ENCODE measurements at regions of chr11 and their contacts with region 1.

Region 1: DNA sequence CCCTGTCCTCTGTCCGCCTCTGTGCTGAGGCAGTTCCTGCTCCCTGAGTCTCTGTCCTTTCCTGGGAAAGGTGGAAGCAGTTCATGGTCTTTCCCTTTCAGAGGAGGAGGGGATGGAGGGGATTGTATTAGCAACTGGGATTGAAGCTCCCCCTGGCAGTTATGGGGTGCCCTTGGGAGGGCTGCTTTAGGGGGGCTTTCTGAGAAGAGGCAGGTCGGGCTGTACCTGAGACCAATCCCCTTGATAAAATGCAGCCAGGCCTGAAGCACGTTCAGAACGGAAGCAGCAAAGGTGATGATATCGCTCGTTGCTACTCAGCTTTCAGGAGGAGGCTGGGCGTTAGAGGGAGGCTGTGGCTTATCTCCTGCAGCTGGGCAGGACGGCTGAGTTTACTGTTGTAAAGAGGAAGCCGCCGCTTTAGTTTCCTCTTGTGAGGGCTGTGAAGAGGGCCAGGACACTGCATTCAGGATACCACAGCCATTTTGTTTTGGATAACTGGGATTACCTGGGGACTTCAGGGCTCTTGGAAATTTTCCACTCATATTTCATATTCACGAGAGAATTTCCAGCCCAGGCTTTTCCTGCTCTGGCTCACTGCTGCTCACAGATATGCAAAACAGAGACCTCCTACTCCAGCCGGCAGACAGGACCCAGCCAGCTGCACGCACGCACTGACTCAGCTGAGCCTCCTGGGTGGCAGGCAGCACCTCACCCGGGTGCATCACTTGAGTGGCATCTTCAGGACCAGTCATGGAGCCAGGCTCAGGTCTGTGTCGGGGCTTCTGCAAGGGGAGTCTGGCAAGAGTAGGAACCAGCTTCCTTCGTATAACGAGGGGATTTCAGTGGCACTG is 798 bp downstream of the AMPD3 start:
- DNase-seq: peak; percentile 69
- ATAC-seq: peak; percentile 70
- H3K4me3 Mint-ChIP-seq: peak overlapping the region; percentile 87
- H3K27ac Mint-ChIP-seq: peak overlapping the region; percentile 96
- H3K4me1 Mint-ChIP-seq: peaks cover 95% of the 10 kb centered on the region
- H3K27me3 Mint-ChIP-seq: no peaks in the 10 kb centered on the region
- CTCF ChIP-seq: no peak

Region 2: GRCh38 chr11:8688414-8689362 is 1767.2 kb before region 1 on chr11:
- CTCF ChIA-PET with region 1: no interaction called
- POLR2A ChIA-PET with region 1: no interaction called
- intact Hi-C with region 1: loop called (anchors 10 kb)
- DNase-seq: peak; percentile 84
- ATAC-seq: peak; percentile 90
- H3K4me3 Mint-ChIP-seq: peak overlapping the region; percentile 97
- H3K27ac Mint-ChIP-seq: peak overlapping the region; percentile 95
- H3K4me1 Mint-ChIP-seq: peaks cover 49% of the 10 kb centered on the region
- H3K27me3 Mint-ChIP-seq: no peaks in the 10 kb centered on the region
- CTCF ChIP-seq: no peak

Region 3: GRCh38 chr11:9675691-9676090 is 780.2 kb before region 1 on chr11:
- CTCF ChIA-PET with region 1: no interaction called
- POLR2A ChIA-PET with region 1: no interaction called
- intact Hi-C with region 1: no loop called
- DNase-seq: no peak
- ATAC-seq: peak; percentile 43
- H3K4me3 Mint-ChIP-seq: peak overlapping the region; percentile 74
- H3K27ac Mint-ChIP-seq: peak overlapping the region; percentile 84
- H3K4me1 Mint-ChIP-seq: peaks cover 67% of the 10 kb centered on the region
- H3K27me3 Mint-ChIP-seq: no peaks in the 10 kb centered on the region
- CTCF ChIP-seq: no peak

Region 4: DNA sequence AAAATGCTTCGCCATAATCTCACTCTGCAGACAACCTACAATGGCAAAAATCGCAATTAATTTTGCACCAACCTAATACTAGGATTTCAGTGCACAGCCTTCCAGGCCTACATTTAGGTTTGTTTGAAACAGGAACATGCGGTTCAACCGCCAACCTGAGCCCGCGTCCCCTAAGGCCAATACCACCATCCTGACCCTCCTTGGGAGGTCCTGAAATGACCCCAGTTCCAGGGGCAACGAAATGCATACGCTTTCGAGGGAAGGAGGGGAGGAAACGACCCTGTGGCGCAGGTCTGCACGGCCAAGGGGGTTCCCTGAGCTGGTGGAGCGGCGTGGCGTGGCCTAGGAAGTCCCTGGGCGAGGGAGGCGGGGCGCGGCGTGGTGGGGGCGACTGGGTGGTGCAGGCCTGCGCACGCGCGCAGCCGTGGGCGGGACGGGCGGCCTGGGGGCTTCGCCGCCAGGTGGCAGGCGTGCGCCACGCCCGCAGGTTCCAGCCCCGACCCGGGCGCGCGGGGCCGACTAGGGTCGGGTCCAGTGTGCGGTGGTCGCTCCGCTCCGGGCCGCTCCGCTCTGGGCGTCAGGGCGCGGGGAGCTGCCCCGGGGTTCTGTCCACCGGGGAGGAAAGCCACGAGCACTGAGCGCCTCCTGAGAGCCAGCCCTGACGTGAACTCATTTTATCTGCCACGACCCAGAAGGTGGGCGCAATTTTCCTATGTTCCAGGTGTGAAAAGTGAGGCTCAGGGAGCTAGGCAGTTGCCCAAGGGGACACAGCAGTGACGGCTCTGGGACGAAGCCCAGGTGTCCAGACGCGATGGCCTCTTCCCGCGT is 697.8 kb before region 1 on chr11:
- CTCF ChIA-PET with region 1: no interaction called
- POLR2A ChIA-PET with region 1: no interaction called
- intact Hi-C with region 1: loop called (anchors 10 kb)
- DNase-seq: peak; percentile 96
- ATAC-seq: peak; percentile 59
- H3K4me3 Mint-ChIP-seq: peak overlapping the region; percentile 87
- H3K27ac Mint-ChIP-seq: peak overlapping the region; percentile 98
- H3K4me1 Mint-ChIP-seq: peaks cover 81% of the 10 kb centered on the region
- H3K27me3 Mint-ChIP-seq: no peaks in the 10 kb centered on the region
- CTCF ChIP-seq: peak; percentile 47

Region 5: DNA sequence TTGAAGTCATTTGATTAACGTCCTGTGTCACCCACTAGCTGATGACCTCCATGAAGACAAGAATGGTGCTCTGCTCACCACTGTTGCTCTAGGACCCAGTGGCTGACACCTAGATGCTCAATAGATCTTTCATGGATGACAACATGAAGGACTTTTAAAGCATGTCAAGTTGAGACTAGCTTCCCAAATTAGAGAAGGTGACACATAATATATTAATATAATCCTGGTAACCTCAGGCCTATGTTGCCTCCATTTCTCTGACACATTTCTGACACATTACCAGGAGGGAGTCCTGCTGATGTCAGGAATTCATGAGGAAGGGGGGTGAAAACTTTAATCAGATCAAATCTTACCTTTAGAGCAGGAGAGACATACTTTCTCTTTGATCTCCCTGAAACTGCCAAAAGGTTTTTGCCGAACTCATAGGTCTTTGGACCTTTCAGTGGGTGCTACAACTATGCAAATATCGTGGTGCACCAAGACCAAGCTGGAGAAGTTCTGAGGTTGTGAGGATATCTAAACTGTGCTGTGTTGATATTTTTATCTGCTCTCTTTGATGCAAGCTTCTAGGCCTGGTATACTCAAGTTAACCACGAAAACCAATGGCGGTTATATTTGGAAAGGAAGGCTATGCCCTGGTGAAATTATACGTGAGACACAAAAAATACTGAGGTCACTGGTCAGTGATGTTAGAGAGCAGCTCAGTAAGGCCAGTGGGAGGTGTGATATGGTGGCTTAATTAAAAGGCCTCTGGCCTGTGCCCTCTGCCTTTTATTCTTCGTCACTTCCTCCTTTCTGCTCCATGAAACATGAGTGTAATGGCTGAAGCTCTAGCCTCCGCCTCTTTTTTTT is 14.0 kb before region 1 on chr11:
- CTCF ChIA-PET with region 1: interaction called, 10 read pairs
- POLR2A ChIA-PET with region 1: interaction called, 159 read pairs
- intact Hi-C with region 1: loop called (anchors 1 kb)
- DNase-seq: no peak
- ATAC-seq: peak; percentile 84
- H3K4me3 Mint-ChIP-seq: peak overlapping the region; percentile 60
- H3K27ac Mint-ChIP-seq: peak overlapping the region; percentile 97
- H3K4me1 Mint-ChIP-seq: peaks cover 48% of the 10 kb centered on the region
- H3K27me3 Mint-ChIP-seq: no peaks in the 10 kb centered on the region
- CTCF ChIP-seq: no peak

Region 6: DNA sequence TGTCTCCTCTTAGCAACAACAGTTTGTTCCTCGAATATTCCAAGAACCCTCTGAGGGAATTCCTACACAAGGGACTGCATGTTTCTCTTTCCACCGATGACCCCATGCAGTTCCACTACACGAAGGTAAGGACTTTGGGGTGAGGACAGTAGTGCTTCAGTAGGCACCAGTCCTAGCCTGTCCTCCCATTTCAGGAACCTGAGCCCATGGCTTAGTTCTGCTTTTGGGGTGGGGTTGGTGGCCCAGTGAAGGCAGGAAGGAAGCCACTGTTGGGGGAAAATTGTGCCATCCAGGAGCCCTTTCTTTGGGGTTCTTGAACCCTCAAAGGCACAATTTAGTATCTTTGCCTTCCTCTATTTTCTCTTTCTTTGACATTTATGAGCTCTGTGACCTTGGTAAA is 46.9 kb after region 1 on chr11:
- CTCF ChIA-PET with region 1: interaction called, 3 read pairs
- POLR2A ChIA-PET with region 1: interaction called, 9 read pairs
- intact Hi-C with region 1: loop called (anchors 1 kb)
- DNase-seq: no peak
- ATAC-seq: peak; percentile 40
- H3K4me3 Mint-ChIP-seq: peak overlapping the region; percentile 12
- H3K27ac Mint-ChIP-seq: peak overlapping the region; percentile 77
- H3K4me1 Mint-ChIP-seq: peaks cover 26% of the 10 kb centered on the region
- H3K27me3 Mint-ChIP-seq: no peaks in the 10 kb centered on the region
- CTCF ChIP-seq: no peak

Region 7: GRCh38 chr11:10606536-10607208 is 150.8 kb after region 1 on chr11:
- CTCF ChIA-PET with region 1: no interaction called
- POLR2A ChIA-PET with region 1: interaction called, 17 read pairs
- intact Hi-C with region 1: loop called (anchors 2 kb)
- DNase-seq: no peak
- ATAC-seq: peak; percentile 84
- H3K4me3 Mint-ChIP-seq: peak overlapping the region; percentile 73
- H3K27ac Mint-ChIP-seq: peak overlapping the region; percentile 90
- H3K4me1 Mint-ChIP-seq: peaks cover 99% of the 10 kb centered on the region
- H3K27me3 Mint-ChIP-seq: no peaks in the 10 kb centered on the region
- CTCF ChIP-seq: no peak

Region 8: GRCh38 chr11:11841723-11842420 is 1386.0 kb after region 1 on chr11 and contains the start of gene USP47:
- CTCF ChIA-PET with region 1: no interaction called
- POLR2A ChIA-PET with region 1: interaction called, 3 read pairs
- intact Hi-C with region 1: loop called (anchors 5 kb)
- DNase-seq: peak; percentile 94
- ATAC-seq: peak; percentile 81
- H3K4me3 Mint-ChIP-seq: no peak within 1 kb of the TSS
- H3K27ac Mint-ChIP-seq: no peak within 1 kb of the TSS
- H3K4me1 Mint-ChIP-seq: peaks cover 27% of the 10 kb centered on the region
- H3K27me3 Mint-ChIP-seq: peaks cover 3% of the 10 kb centered on the region
- CTCF ChIP-seq: no peak
- total RNA-seq, gene USP47: 48.5 and 50.3 TPM in 2 replicates